BJ (cell line): ENCODE measurements at regions of chr1 and their contacts with region 1.

Region 1: DNA sequence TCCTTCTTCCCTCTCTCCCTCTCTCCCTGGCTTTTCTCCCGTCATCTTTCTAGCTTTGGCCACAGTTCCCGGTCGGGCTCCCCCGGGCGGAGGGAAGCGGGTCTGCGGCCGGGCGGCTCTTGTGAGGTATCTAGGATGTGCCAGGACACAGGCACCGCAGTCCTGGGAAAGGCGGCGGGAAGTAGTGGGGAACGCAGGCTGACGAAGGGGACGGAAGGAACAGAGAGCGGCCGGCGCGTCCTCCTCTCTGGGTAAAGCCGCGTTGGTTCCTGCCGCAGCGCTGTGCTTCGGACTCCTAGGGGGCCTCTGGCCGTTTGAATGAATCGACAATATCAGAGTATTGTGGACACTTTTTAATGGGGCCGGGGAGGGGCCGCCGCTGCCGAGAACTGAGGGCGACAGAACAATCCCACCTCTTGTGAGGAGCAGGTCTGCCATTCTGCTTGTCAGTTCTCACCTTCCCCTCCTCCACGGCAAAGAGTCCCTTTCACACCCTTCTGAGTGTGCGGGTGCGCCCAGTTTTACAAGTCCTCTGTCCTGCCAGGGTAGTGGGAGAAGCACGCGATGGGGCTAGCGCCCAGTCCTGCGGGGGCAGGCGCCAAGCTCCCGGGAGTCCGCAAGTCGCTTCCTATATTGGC is 1.2 kb upstream of the LHX9 start:
- DNase-seq: no peak
- H3K4me3 ChIP-seq: peak overlapping the region; percentile 70
- H3K27me3 ChIP-seq: peaks cover 48% of the 10 kb centered on the region
- CTCF ChIP-seq: peak; percentile 87

Region 2: DNA sequence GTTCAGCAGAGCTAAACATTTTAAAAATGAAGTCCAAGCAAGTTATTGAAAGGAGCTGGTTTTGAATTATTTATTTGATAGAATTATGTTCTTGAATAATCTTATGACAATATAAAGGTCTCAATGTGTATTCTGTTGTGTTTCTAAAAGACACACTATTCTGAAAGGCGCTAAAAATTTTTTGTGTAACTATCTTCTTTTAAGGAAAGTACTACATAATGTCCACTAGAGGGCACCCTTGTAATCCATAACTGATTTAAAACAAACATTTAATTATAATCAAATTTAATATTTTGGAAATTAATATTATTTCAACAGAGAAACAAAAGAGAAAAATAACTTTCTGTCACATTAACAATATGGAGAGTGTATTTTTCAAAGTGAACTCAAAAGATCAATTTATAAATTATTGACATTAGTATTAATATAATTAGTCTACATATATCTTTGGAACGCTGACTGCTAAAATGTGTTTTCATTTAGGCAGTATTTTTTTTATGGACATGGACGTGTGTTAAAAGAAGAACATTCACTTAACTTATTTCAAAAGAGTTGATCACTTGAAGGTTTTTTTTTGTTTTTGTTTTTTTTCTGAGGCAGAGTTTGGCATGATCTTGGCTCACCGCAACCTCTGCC is 389.1 kb before region 1 on chr1:
- CTCF ChIA-PET with region 1: interaction called, 10 read pairs
- POLR2A ChIA-PET with region 1: no interaction called
- DNase-seq: no peak
- H3K4me3 ChIP-seq: no peak overlapping the region
- H3K27me3 ChIP-seq: no peaks in the 10 kb centered on the region
- CTCF ChIP-seq: peak; percentile 44

Region 3: DNA sequence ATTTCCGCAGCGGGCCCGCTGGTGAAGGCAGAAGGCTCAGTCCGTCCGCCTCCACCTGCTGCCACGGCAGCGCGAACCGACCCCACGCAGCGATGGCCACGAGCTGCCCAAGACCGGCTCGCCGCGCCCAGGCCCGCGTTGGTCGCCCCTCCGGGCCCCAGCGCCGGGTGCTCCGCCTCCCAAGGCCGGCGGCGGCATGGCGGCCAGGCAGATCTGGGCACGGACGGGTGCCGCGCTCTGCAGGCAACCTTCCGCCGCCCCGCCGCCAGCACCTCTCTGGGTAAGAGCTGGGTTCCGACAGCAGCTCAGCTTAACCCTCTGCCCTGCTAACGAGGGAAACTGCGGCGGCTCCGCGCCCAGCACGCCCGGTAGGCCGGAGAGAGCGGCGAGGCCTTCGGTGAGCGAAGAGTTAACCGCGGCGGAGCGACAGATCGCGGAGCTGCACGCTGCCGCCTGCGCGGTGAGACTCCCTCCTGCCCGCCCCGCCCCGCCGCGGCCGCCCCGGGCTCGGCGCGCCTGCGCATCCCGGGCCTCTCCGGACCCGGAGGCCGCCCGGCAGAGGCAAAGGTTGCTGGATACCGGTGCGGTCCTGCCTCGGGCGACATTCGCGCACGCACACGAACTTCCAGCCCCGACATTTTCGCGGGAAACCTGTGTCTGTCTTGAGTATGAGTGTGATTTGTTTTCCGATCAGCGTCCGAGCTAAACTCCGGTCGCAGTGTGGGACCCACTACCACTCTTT is 13.4 kb before region 1 on chr1 and contains the start of gene C1orf53:
- CTCF ChIA-PET with region 1: interaction called, 22 read pairs
- POLR2A ChIA-PET with region 1: interaction called, 4 read pairs
- DNase-seq: peak; percentile 44
- H3K4me3 ChIP-seq: peak within 1 kb of the TSS; percentile 72
- H3K27me3 ChIP-seq: no peaks in the 10 kb centered on the region
- CTCF ChIP-seq: no peak
- polyA plus RNA-seq, gene C1orf53: 9.7 and 13.0 TPM in 2 replicates